Natural killer cell (primary cell): ENCODE measurements at regions of chr22 and their contacts with region 1.

Region 1: GRCh38 chr22:29883045-29883774 is at the start of gene MTMR3:
- DNase-seq: peak; percentile 90 to 93
- ATAC-seq: peak; percentile 75 to 90 (median 80)
- H3K4me3 ChIP-seq: peak within 1 kb of the TSS; percentile 81
- H3K4me3 Mint-ChIP-seq: peak within 1 kb of the TSS; percentile 92
- H3K27ac ChIP-seq: peak within 1 kb of the TSS; percentile 81
- H3K27ac Mint-ChIP-seq: peak within 1 kb of the TSS; percentile 87 to 91
- H3K4me1 ChIP-seq: peaks cover 20% of the 10 kb centered on the region
- H3K4me1 Mint-ChIP-seq: peaks cover 9 to 14% of the 10 kb centered on the region in 2 donors
- H3K27me3 ChIP-seq: no peaks in the 10 kb centered on the region
- H3K27me3 Mint-ChIP-seq: no peaks in the 10 kb centered on the region
- CTCF ChIP-seq: no peak
- total RNA-seq, gene MTMR3: 62.1 to 83.4 (median 75.6) TPM

Region 2: DNA sequence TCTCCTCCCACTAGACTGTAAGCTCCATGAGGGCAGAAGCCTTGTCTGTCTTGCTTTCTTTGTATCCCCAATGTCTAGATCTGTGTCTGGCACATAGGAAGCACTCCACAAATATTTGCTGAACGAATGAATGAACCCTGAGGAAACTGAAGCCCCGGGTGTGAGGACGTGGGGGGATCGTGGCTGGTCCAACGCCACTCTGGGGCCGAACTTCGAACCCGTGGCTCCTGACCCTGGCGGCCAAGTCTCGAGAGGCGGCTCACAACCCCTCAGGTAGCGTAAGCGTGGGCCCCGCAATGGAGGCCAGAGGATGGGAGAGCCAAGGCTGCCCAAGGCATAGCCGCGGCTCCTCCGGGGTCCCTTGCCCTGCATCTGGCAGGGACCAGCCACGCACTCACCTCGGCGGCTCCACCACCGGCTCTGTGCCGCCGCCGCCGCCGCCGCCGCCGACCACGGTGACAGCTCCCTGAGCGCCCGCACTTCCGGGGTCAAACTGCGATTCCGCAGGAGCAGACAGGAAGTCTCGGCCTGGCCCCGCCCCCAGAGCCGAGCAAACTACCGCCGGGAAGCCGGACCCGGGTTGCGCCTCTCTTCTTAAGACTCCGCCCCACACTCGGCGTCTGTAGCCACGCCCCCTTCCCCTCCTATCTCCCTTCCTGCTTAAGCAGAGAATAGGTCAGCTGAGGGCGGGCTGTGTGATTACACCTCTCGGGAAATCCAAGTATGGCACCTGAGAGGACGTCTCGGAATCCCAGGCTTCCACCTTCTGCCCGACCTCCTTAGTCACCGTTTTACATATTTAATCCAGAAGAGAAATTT is 45.2 kb before region 1 on chr22 and contains the start of gene ASCC2:
- intact Hi-C with region 1: loop called (anchors 1 kb)
- DNase-seq: peak; percentile 96 to 99
- ATAC-seq: peak; percentile 96 to 99 (median 97)
- H3K4me3 ChIP-seq: peak within 1 kb of the TSS; percentile 65
- H3K4me3 Mint-ChIP-seq: peak within 1 kb of the TSS; percentile 96
- H3K27ac ChIP-seq: peak within 1 kb of the TSS; percentile 84
- H3K27ac Mint-ChIP-seq: peak within 1 kb of the TSS; percentile 98
- H3K4me1 ChIP-seq: peaks cover 14% of the 10 kb centered on the region
- H3K4me1 Mint-ChIP-seq: peaks cover 35 to 40% of the 10 kb centered on the region in 2 donors
- H3K27me3 ChIP-seq: no peaks in the 10 kb centered on the region
- H3K27me3 Mint-ChIP-seq: no peaks in the 10 kb centered on the region
- CTCF ChIP-seq: no peak
- total RNA-seq, gene ASCC2: 102 to 130 (median 128) TPM

Region 3: GRCh38 chr22:29907815-29908515 is 24.8 kb after region 1 on chr22:
- intact Hi-C with region 1: no loop called
- DNase-seq: no peak
- ATAC-seq: no peak
- H3K4me3 ChIP-seq: no peak overlapping the region
- H3K4me3 Mint-ChIP-seq: no peak overlapping the region
- H3K27ac ChIP-seq: no peak overlapping the region
- H3K27ac Mint-ChIP-seq: peak overlapping the region in 1 of 2 donors; percentile 33
- H3K4me1 ChIP-seq: peaks cover 3% of the 10 kb centered on the region
- H3K4me1 Mint-ChIP-seq: peaks cover 52 to 53% of the 10 kb centered on the region in 2 donors
- H3K27me3 ChIP-seq: no peaks in the 10 kb centered on the region
- H3K27me3 Mint-ChIP-seq: no peaks in the 10 kb centered on the region
- CTCF ChIP-seq: no peak